T-cell (primary cell): ENCODE measurements at regions of chr2 and their contacts with region 1.

Region 1: DNA sequence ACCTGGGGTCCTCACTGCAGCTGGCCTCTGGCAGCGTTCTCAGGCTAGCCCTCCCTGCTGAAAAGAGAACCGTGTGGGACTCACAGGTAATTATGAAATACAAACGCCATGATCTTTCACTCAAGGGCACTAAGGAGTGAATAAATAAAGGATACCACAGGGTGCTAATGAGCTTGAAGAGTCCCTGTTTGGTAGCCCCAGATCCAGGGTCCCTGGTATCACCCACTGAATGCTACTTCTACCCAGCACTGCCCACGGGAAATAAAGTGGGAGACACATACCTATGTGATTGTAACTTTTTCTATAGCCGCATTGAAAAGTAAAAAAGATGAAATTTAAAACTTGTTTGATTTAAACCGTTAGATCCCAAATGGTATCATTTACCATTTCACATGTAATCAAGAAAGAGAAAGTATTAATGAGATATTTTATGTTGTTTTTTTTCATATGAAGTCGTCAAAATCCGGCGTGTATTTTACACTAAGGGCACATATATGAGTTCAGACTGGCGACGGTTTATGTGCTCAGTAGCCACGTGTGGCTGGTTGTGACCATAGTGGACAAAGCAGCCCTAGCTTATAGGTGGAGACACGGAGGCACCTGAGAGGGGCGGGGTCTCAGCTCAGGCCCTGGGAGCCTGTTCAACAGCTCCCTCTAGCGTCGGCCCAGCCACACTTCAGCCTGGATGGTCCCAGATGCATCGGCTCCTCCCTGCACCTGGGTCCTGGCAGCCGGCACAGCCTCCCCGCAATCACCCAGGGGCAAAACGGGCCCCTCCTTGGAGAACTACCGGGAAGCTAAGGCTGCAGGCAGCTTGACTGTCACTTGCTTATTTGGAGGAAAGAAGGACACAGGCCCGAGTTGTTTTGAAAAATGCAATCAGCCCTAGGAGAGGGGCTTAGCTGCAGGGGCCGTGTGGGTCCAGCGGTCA is 39.2 kb downstream of the ODC1 start:
- DNase-seq: peak; percentile 57 to 92 (median 76)
- ATAC-seq: peak; percentile 73 to 87 (median 82)
- H3K4me3 ChIP-seq: peak overlapping the region in 1 of 2 donors; percentile 11
- H3K4me3 Mint-ChIP-seq: peak overlapping the region; percentile 55 to 68 (median 65)
- H3K27ac ChIP-seq: peak overlapping the region; percentile 56
- H3K27ac Mint-ChIP-seq: peak overlapping the region; percentile 90 to 93
- H3K4me1 ChIP-seq: peaks cover 26 to 52% of the 10 kb centered on the region in 2 experiments
- H3K4me1 Mint-ChIP-seq: peaks cover 42 to 47% (median 42%) of the 10 kb centered on the region in 3 donors
- H3K27me3 ChIP-seq: no peaks in the 10 kb centered on the region
- H3K27me3 Mint-ChIP-seq: no peaks in the 10 kb centered on the region

Region 2: GRCh38 chr2:10120158-10120886 is 288.6 kb before region 1 on chr2:
- CTCF ChIA-PET with region 1: interaction called, 41 to 65 read pairs
- POLR2A ChIA-PET with region 1: interaction called in 1 of 2 experiments, 7 read pairs
- DNase-seq: peak; percentile 81 to 95 (median 89)
- ATAC-seq: peak; percentile 85 to 87 (median 86)
- H3K4me3 ChIP-seq: peak overlapping the region; percentile 45 to 79
- H3K4me3 Mint-ChIP-seq: peak overlapping the region; percentile 88 to 97 (median 88)
- H3K27ac ChIP-seq: peak overlapping the region; percentile 58
- H3K27ac Mint-ChIP-seq: peak overlapping the region; percentile 92 to 94
- H3K4me1 ChIP-seq: peaks cover 17 to 49% of the 10 kb centered on the region in 2 experiments
- H3K4me1 Mint-ChIP-seq: peaks cover 34 to 47% (median 41%) of the 10 kb centered on the region in 3 donors
- H3K27me3 ChIP-seq: peaks cover 0 to 16% of the 10 kb centered on the region in 2 experiments
- H3K27me3 Mint-ChIP-seq: peaks cover 13 to 14% of the 10 kb centered on the region in 2 donors

Region 3: GRCh38 chr2:10302479-10303180 is 106.3 kb before region 1 on chr2 and contains the start of gene HPCAL1:
- CTCF ChIA-PET with region 1: interaction called, 5 to 38 read pairs
- POLR2A ChIA-PET with region 1: interaction called, 4 to 5 read pairs
- DNase-seq: peak; percentile 54 to 89 (median 73)
- ATAC-seq: peak; percentile 73 to 78 (median 74)
- H3K4me3 ChIP-seq: peak within 1 kb of the TSS; percentile 88 to 93
- H3K4me3 Mint-ChIP-seq: peak within 1 kb of the TSS; percentile 93 to 99 (median 96)
- H3K27ac ChIP-seq: peak within 1 kb of the TSS; percentile 77
- H3K27ac Mint-ChIP-seq: peak within 1 kb of the TSS; percentile 89 to 92
- H3K4me1 ChIP-seq: peaks cover 47 to 64% of the 10 kb centered on the region in 2 experiments
- H3K4me1 Mint-ChIP-seq: peaks cover 67 to 74% (median 68%) of the 10 kb centered on the region in 3 donors
- H3K27me3 ChIP-seq: no peaks in the 10 kb centered on the region
- H3K27me3 Mint-ChIP-seq: no peaks in the 10 kb centered on the region
- total RNA-seq, gene HPCAL1: 39.5 to 87.3 (median 83.2) TPM

Region 4: GRCh38 chr2:10344105-10345066 is 64.5 kb before region 1 on chr2:
- CTCF ChIA-PET with region 1: no interaction called
- POLR2A ChIA-PET with region 1: no interaction called
- DNase-seq: no peak
- ATAC-seq: no peak
- H3K4me3 ChIP-seq: no peak overlapping the region
- H3K4me3 Mint-ChIP-seq: peak overlapping the region in 1 of 3 donors; percentile 43
- H3K27ac ChIP-seq: no peak overlapping the region
- H3K27ac Mint-ChIP-seq: peak overlapping the region; percentile 2 to 15
- H3K4me1 ChIP-seq: peaks cover 22 to 71% of the 10 kb centered on the region in 2 experiments
- H3K4me1 Mint-ChIP-seq: peaks cover 78 to 82% (median 79%) of the 10 kb centered on the region in 3 donors
- H3K27me3 ChIP-seq: no peaks in the 10 kb centered on the region
- H3K27me3 Mint-ChIP-seq: no peaks in the 10 kb centered on the region

Region 5: DNA sequence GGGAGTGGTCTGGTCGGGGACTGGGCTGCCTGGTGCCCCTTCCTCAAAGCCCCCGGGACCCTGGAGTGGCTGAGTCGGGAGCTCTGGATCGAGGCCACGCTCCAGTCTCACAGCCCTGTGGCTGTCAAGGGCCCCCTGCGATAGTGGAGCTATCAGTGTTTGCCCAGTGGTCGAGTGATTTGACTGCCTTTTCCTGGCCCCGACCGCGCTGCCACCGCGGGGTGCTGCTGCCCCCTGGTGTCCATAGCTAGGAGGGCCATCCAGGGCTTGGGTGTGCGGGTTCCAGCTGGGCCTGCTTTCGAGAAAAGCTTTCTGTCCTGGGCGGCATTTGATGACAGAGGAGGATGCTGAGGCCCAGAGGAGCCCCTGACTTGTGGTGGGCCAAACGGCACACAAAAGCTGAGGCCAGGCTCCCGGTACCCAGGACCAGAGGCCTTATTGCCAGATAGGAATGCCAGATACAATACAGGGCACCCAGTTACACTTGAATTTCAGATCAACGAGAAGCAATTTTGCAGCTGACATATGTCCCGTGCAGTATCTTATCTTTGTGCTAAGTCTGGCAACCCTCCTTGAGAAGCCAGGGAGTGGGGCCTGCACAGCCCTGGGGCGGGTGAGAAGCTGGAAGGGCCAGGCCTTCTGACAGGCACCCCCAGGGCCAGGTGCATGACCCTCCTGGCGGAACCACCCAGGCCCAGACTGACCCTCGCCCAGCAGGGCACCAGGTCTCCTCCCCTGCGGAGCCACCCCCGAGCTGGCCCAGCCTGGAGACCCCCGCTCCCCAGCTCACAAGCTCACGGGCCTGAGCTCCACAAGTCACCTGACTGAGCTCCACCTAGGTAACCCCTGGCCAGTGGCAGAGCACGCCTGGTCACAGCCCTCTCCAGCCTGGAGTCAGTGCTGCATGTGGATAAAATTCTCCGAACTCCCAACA is 26.2 kb after region 1 on chr2:
- CTCF ChIA-PET with region 1: interaction called, 9 to 18 read pairs
- POLR2A ChIA-PET with region 1: no interaction called
- DNase-seq: peak in 34 of 35 experiments; percentile 23 to 86 (median 59)
- ATAC-seq: peak; percentile 64 to 72 (median 66)
- H3K4me3 ChIP-seq: no peak overlapping the region
- H3K4me3 Mint-ChIP-seq: no peak overlapping the region
- H3K27ac ChIP-seq: no peak overlapping the region
- H3K27ac Mint-ChIP-seq: no peak overlapping the region
- H3K4me1 ChIP-seq: peaks cover 0 to 22% of the 10 kb centered on the region in 2 experiments
- H3K4me1 Mint-ChIP-seq: peaks cover 11 to 18% (median 14%) of the 10 kb centered on the region in 3 donors
- H3K27me3 ChIP-seq: peaks cover 0 to 30% of the 10 kb centered on the region in 2 experiments
- H3K27me3 Mint-ChIP-seq: peaks cover 3 to 4% of the 10 kb centered on the region in 2 donors